ENCODE measurements at regions of chr5 and their contacts with region 1.

Region 1: DNA sequence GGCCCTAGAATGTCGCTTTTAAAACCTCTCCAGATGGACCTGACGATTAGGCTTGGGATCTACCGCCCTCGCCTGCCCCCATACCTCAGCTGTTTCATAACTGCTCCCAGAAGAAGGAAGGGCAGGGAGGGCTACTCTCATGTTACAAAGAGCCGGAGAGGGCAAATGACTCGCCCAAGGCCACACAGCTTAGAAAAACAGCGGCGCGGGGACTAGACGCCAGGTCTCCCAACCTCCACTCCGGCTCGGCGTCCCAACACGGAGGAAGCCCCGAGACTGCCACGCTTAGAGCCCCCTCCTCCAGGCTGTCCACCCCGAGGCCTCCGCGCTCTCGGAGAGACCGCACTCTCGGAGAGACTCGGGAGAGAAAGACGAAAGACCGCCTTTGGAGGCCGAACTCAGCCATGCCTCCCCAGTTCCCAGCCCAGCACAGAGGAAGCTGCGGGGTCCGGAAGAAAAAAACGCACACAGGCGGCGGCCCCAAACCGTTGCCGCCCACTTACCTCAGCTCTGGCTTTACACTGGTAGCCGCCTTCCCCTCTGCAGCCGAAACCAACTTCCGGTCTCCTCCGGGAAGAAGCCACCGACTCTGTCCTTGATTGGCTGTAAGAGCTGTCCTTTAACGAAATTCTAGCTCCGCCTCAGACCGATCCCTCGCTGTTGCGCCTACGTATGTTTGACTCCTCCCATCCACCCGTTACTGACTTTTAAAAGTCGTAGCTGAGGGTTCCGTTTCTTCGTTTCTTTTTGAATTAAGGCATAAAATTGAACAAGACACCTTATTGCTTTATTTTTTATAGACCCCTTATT is at the start of gene MED7:
- DNase-seq: peak; percentile 92 to 95 (median 94)
- ATAC-seq: peak; percentile 99
- H3K4me3 ChIP-seq: peak within 1 kb of the TSS; percentile 69
- H3K27ac ChIP-seq: peak within 1 kb of the TSS; percentile 98
- H3K4me1 ChIP-seq: peaks cover 2% of the 10 kb centered on the region
- H3K27me3 ChIP-seq: no peaks in the 10 kb centered on the region
- total RNA-seq, gene MED7: 9.6 to 10.6 (median 10.2) TPM

Region 2: DNA sequence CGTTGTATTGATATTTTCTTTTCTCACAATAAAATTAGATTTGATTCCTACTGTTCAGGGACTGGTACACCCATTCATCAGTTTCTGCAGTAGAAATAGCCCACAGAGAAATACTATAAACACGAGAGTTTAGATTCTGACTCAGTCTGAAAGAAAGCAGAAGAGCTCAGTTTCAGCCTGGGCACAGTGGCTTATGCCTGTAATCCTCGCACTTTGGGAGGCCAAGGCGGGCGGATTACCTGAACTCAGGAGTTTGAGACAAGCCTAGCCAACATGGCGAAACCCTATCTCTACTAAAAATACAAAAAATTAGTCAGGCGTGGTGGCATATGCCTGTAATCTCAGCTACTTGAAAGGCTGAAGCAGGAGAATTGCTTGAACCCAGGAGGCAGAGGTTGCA is 46.7 kb after region 1 on chr5:
- intact Hi-C with region 1: no loop called
- DNase-seq: no peak
- ATAC-seq: no peak
- H3K4me3 ChIP-seq: no peak overlapping the region
- H3K27ac ChIP-seq: no peak overlapping the region
- H3K4me1 ChIP-seq: no peaks in the 10 kb centered on the region
- H3K27me3 ChIP-seq: no peaks in the 10 kb centered on the region

Region 3: GRCh38 chr5:157253547-157253946 is 111.0 kb after region 1 on chr5:
- intact Hi-C with region 1: loop called in 1 of 4 experiments (anchors 10 kb)
- DNase-seq: peak; percentile 28 to 54 (median 52)
- ATAC-seq: peak; percentile 83 to 86
- H3K4me3 ChIP-seq: no peak overlapping the region
- H3K27ac ChIP-seq: no peak overlapping the region
- H3K4me1 ChIP-seq: no peaks in the 10 kb centered on the region
- H3K27me3 ChIP-seq: no peaks in the 10 kb centered on the region

Measured in right cardiac atrium (tissue), 5 donors.